ENCODE measurements at regions of chr17 and their contacts with region 1.

Region 1: DNA sequence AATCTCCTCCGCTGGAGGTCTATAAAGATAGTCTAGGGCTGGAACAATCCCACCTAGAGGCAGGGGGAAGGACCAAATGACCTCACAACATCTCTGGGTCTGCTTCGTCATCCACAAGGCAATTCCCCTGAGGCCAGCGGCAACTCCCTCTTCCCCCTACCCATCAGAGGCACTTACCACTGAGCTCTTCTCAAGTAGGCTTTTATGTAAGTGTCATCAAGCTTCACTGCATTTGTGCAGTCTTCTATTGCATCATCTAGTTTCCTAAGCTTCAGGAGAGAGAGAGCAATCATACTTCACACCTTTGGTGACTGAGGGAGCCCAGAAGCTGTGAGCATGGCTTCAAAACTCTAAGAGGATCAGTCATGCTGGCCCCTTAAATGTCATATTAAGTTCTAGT is 21.0 kb downstream of the CNP start:
- DNase-seq: no peak
- H3K4me3 Mint-ChIP-seq: no peak overlapping the region
- H3K27ac Mint-ChIP-seq: no peak overlapping the region
- H3K4me1 Mint-ChIP-seq: no peaks in the 10 kb centered on the region
- H3K27me3 Mint-ChIP-seq: no peaks in the 10 kb centered on the region
- CTCF ChIP-seq: no peak

Region 2: GRCh38 chr17:41811549-41812380 is 175.9 kb before region 1 on chr17 and contains the start of gene P3H4:
- CTCF ChIA-PET with region 1: no interaction called
- POLR2A ChIA-PET with region 1: no interaction called
- intact Hi-C with region 1: no loop called
- DNase-seq: peak; percentile 74
- H3K4me3 Mint-ChIP-seq: peak within 1 kb of the TSS; percentile 95
- H3K27ac Mint-ChIP-seq: peak within 1 kb of the TSS; percentile 85
- H3K4me1 Mint-ChIP-seq: peaks cover 19% of the 10 kb centered on the region
- H3K27me3 Mint-ChIP-seq: no peaks in the 10 kb centered on the region
- CTCF ChIP-seq: peak; percentile 52
- total RNA-seq, gene P3H4: 36.4 and 41.5 TPM in 2 replicates

Region 3: GRCh38 chr17:41870627-41871026 is 117.0 kb before region 1 on chr17:
- CTCF ChIA-PET with region 1: no interaction called
- POLR2A ChIA-PET with region 1: no interaction called
- intact Hi-C with region 1: no loop called
- DNase-seq: no peak
- H3K4me3 Mint-ChIP-seq: no peak overlapping the region
- H3K27ac Mint-ChIP-seq: no peak overlapping the region
- H3K4me1 Mint-ChIP-seq: no peaks in the 10 kb centered on the region
- H3K27me3 Mint-ChIP-seq: no peaks in the 10 kb centered on the region
- CTCF ChIP-seq: no peak

Region 4: GRCh38 chr17:41976142-41976768 is 11.4 kb before region 1 on chr17:
- CTCF ChIA-PET with region 1: no interaction called
- POLR2A ChIA-PET with region 1: interaction called, 10 read pairs
- intact Hi-C with region 1: no loop called
- DNase-seq: no peak
- H3K4me3 Mint-ChIP-seq: no peak overlapping the region
- H3K27ac Mint-ChIP-seq: no peak overlapping the region
- H3K4me1 Mint-ChIP-seq: no peaks in the 10 kb centered on the region
- H3K27me3 Mint-ChIP-seq: no peaks in the 10 kb centered on the region
- CTCF ChIP-seq: no peak

Region 5: DNA sequence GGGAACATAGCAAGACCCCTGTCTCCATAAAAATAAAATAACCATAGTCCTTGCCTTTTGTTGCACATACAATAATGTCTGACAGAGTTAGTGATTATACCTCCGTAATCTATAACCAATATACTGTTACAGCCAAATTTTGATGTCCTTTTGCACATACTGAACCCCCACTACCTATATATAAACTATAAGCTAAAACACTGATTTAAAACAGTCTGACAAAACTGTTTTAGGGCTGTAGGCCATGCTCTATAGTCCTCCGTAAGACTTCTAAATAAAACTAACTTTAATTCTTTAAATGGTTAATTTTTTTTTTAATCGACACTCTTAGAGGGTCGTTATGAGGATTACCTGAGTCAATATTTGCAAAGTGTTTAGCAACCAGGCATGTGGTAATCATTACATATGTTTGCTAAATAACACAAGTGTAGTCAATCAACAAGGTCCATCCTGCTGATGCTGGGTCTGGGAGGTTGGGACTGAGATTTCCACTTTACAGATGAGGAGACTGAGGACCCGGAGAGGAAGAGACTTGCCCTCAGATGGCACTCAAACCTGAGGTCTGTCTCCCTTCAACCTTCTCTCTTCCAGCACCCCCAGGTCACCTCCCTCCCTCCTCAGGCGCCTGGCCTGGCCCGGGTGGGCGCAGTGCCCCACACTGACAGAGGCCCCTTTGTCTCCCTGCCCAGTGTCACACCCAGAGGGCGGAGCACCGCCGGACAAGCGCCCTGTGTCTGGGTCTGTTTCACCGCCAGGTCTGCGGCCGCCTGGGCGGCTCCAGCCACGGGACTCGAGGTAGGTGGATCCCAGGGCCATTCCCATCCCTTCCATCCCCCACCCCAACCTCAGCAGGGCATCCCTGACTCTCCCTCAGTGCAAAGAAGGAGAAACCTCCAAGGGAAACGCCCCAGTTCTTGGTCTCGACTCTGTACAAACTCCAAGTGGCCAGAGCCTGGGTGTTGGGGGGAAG is 100.4 kb after region 1 on chr17:
- CTCF ChIA-PET with region 1: no interaction called
- POLR2A ChIA-PET with region 1: no interaction called
- intact Hi-C with region 1: no loop called
- DNase-seq: no peak
- H3K4me3 Mint-ChIP-seq: no peak overlapping the region
- H3K27ac Mint-ChIP-seq: no peak overlapping the region
- H3K4me1 Mint-ChIP-seq: no peaks in the 10 kb centered on the region
- H3K27me3 Mint-ChIP-seq: peaks cover 21% of the 10 kb centered on the region
- CTCF ChIP-seq: no peak

Measured in MCF 10A (cell line).